ENCODE measurements at regions of chr1 and their contacts with region 1.

Region 1: GRCh38 chr1:41662061-41662764 is 177.7 kb upstream of the EDN2 start:
- H3K4me3 Mint-ChIP-seq: peak overlapping the region; percentile 62
- H3K27ac Mint-ChIP-seq: peak overlapping the region; percentile 88
- H3K4me1 Mint-ChIP-seq: peaks cover 75% of the 10 kb centered on the region
- H3K27me3 Mint-ChIP-seq: peaks cover 5% of the 10 kb centered on the region

Region 2: GRCh38 chr1:41765152-41765551 is 102.9 kb after region 1 on chr1:
- intact Hi-C with region 1: loop called (anchors 5 kb)
- H3K4me3 Mint-ChIP-seq: peak overlapping the region; percentile 58
- H3K27ac Mint-ChIP-seq: peak overlapping the region; percentile 88
- H3K4me1 Mint-ChIP-seq: peaks cover 79% of the 10 kb centered on the region
- H3K27me3 Mint-ChIP-seq: peaks cover 7% of the 10 kb centered on the region